Heart left ventricle (tissue), 16 donors: ENCODE measurements at regions of chr3 and their contacts with region 1.

Region 1: GRCh38 chr3:141094790-141095545 is 43.8 kb downstream of the SPSB4 start:
- DNase-seq: peak; percentile 82 to 92 (median 88)
- ATAC-seq: peak; percentile 82 to 95 (median 92)
- H3K4me3 ChIP-seq: peak overlapping the region in 8 of 12 donors; percentile 33 to 47 (median 39)
- H3K27ac ChIP-seq: peak overlapping the region in 11 of 12 donors; percentile 31 to 74 (median 65)
- H3K4me1 ChIP-seq: peaks cover 3 to 61% (median 30%) of the 10 kb centered on the region in 12 donors
- H3K27me3 ChIP-seq: no peaks in the 10 kb centered on the region
- CTCF ChIP-seq: no peak
- POLR2A ChIP-seq: no peak

Region 2: GRCh38 chr3:141050576-141051442 is 44.2 kb before region 1 on chr3 and contains the start of gene SPSB4:
- intact Hi-C with region 1: loop called in 5 of 10 experiments (anchors 2 to 10 kb)
- DNase-seq: peak; percentile 75 to 88 (median 79)
- ATAC-seq: peak; percentile 77 to 92 (median 90)
- H3K4me3 ChIP-seq: peak within 1 kb of the TSS; percentile 52 to 72 (median 58)
- H3K27ac ChIP-seq: peak within 1 kb of the TSS; percentile 30 to 85 (median 72)
- H3K4me1 ChIP-seq: peaks cover 0 to 34% (median 8%) of the 10 kb centered on the region in 12 donors
- H3K27me3 ChIP-seq: peaks cover 0 to 45% (median 0%) of the 10 kb centered on the region in 9 donors
- CTCF ChIP-seq: peak; percentile 16 to 64 (median 46)
- POLR2A ChIP-seq: no peak
- total RNA-seq, gene SPSB4: 3.7 to 11.1 (median 4.8) TPM

Region 3: DNA sequence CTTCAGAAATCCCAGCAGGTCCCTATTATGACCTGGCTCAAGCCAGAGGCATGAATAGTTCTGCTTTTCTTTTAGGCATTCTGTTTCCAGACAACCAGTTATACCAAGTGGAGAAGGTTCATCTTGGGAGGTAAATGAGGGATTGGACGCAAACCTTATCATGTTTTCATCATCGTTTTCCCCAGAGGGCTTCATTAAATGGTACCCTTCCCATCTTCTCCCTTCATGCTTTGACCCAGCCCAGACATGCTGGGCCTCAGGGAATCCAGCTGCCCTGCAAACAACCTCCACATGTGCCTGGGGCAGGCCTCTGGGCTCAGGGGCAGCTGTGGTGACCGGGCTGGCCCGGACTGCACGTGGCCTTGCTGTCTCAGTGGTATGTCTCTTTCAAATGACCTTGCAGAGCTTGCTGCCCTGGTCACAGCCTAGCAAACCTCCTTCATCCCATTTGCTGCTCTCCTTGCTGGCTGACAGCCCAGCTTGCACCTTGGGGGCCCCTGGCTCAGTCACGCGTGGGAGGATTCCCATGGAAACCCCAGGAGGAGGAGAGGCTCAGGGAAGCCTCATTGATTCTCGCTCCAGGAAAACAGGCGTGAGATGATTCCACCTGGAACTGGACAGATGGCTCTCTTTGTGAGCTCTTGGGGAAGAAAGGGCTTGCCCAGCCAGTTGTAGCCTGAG is 38.3 kb before region 1 on chr3:
- intact Hi-C with region 1: loop called in 5 of 10 experiments (anchors 2 to 10 kb)
- DNase-seq: peak in 2 of 5 donors; percentile 28 to 50
- ATAC-seq: peak; percentile 29 to 58 (median 42)
- H3K4me3 ChIP-seq: no peak overlapping the region
- H3K27ac ChIP-seq: peak overlapping the region in 5 of 12 donors; percentile 11 to 55 (median 34)
- H3K4me1 ChIP-seq: peaks cover 0 to 47% (median 11%) of the 10 kb centered on the region in 12 donors
- H3K27me3 ChIP-seq: peaks cover 0 to 19% (median 0%) of the 10 kb centered on the region in 9 donors
- CTCF ChIP-seq: no peak
- POLR2A ChIP-seq: no peak